ENCODE measurements at regions of chr2 and their contacts with region 1.

Region 1: DNA sequence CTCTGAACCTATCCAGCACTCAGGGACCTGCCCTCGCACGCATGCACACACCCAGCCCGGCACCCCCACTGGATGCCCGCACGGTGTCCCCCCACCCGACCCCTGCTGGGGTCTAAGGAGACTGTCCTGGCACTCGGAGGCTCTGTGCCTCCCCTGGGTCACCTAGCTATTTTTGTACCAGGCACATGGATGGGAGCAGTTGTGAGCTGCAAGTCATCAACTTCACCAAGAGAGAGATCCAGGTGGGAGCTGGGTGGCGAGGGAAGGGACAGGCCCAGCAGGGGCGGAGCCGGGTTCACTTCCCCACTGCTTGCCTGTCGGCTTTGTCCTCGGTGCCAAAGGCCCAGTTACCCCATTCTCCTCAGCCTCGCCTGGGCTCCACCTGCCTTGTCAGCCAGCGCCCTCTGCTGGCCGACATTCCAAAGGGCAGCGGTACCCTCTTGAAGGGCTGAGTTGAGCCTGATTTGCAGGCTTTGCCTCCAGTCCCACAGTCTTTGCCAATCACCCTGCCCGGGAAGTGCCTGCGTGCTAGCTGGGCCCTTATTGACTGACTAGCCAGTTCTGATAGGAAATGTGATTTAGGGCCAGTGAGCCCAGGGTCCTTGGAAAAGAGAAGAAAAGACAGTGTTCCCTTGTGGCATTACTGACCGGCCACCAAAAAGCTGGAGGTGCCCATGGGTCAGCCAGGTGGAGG is 5.8 kb downstream of the NT5DC4 start:
- DNase-seq: peak; percentile 74 to 93 (median 85)
- ATAC-seq: peak; percentile 99
- H3K4me3 ChIP-seq: no peak overlapping the region
- H3K4me3 Mint-ChIP-seq: no peak overlapping the region
- H3K27ac ChIP-seq: no peak overlapping the region
- H3K27ac Mint-ChIP-seq: no peak overlapping the region
- H3K4me1 ChIP-seq: no peaks in the 10 kb centered on the region
- H3K4me1 Mint-ChIP-seq: peaks cover 4% of the 10 kb centered on the region
- H3K27me3 ChIP-seq: no peaks in the 10 kb centered on the region
- H3K27me3 Mint-ChIP-seq: peaks cover 3% of the 10 kb centered on the region
- CTCF ChIP-seq: peak; percentile 87

Region 2: DNA sequence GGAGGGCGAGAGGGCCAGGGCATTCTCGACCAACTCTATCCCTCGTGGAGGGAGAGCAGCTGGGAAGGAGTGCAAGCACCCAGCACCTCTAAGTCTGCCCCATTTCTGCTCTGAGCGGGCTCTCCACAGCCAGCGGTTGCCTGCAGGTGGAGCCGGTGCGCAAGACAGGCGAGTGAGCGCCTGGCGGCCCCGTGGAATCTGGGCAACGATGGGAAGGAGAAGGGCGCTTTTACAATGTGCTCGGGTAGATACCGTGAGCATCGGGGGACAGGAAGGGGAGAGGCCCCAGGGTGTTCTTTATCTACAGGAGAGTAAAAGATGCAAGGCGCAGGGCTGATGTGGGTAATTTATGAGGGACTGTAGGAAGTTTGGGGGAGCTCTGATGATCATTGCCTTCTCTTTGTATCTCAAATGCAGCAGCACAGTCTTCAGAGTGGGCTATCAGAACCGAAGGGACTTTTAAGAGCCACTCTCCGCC is 245.6 kb before region 1 on chr2:
- CTCF ChIA-PET with region 1: interaction called, 4 read pairs
- POLR2A ChIA-PET with region 1: interaction called, 3 read pairs
- intact Hi-C with region 1: loop called in 1 of 2 experiments (anchors 10 kb)
- DNase-seq: peak; percentile 63 to 90 (median 84)
- ATAC-seq: peak; percentile 78
- H3K4me3 ChIP-seq: peak overlapping the region; percentile 56 to 87
- H3K4me3 Mint-ChIP-seq: peak overlapping the region; percentile 95
- H3K27ac ChIP-seq: peak overlapping the region; percentile 30 to 53
- H3K27ac Mint-ChIP-seq: peak overlapping the region; percentile 93
- H3K4me1 ChIP-seq: peaks cover 16% of the 10 kb centered on the region
- H3K4me1 Mint-ChIP-seq: peaks cover 21% of the 10 kb centered on the region
- H3K27me3 ChIP-seq: no peaks in the 10 kb centered on the region
- H3K27me3 Mint-ChIP-seq: no peaks in the 10 kb centered on the region
- CTCF ChIP-seq: peak; percentile 76

Region 3: DNA sequence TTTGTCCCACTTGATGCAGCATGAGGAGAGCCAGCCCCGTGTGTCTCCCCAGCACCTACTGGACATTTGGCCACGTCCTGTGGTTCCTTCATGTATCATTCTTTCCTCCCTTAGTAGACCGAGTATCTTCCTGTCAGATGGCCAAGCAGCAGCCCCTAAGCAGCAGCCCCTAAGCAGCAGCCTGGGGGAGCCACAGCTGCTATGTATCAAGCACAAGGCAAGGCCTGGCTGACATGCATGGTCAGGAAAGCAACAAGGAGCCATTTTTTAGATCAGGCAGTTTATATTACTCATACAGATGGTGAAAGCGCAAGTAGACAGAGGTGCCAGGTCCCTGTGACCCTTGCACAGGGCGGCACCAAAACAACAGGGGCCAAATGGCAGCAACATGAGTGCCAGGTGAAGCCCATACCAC is 120.1 kb before region 1 on chr2:
- CTCF ChIA-PET with region 1: interaction called, 191 read pairs
- POLR2A ChIA-PET with region 1: no interaction called
- intact Hi-C with region 1: no loop called
- DNase-seq: no peak
- ATAC-seq: no peak
- H3K4me3 ChIP-seq: no peak overlapping the region
- H3K4me3 Mint-ChIP-seq: no peak overlapping the region
- H3K27ac ChIP-seq: no peak overlapping the region
- H3K27ac Mint-ChIP-seq: no peak overlapping the region
- H3K4me1 ChIP-seq: no peaks in the 10 kb centered on the region
- H3K4me1 Mint-ChIP-seq: no peaks in the 10 kb centered on the region
- H3K27me3 ChIP-seq: no peaks in the 10 kb centered on the region
- H3K27me3 Mint-ChIP-seq: no peaks in the 10 kb centered on the region
- CTCF ChIP-seq: no peak

Region 4: DNA sequence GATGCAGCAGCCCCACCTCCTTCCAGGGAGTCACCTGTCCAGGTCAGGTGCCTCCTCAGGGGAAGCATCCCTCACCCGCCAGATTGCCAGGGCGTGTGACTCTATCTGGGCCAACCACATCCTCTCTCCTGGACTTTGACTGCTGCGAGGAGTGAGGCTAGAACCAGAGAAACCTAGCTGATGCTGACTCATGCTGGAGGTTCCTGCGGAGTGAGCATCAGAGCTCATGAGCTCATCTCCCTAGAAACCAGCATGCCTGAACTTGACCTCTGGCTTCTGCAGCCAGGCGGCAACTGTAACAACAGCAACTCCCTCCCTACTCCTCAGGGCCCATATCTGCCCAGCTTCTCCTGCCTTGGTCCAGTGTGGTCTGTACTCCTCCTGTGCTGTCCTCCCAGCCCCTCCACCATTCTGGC is 34.1 kb before region 1 on chr2:
- CTCF ChIA-PET with region 1: interaction called, 51 read pairs
- POLR2A ChIA-PET with region 1: no interaction called
- intact Hi-C with region 1: loop called (anchors 1 kb)
- DNase-seq: peak in 8 of 9 experiments; percentile 20 to 74 (median 51)
- ATAC-seq: peak; percentile 64
- H3K4me3 ChIP-seq: no peak overlapping the region
- H3K4me3 Mint-ChIP-seq: no peak overlapping the region
- H3K27ac ChIP-seq: peak overlapping the region in 1 of 2 experiments; percentile 73
- H3K27ac Mint-ChIP-seq: peak overlapping the region; percentile 60
- H3K4me1 ChIP-seq: peaks cover 17% of the 10 kb centered on the region
- H3K4me1 Mint-ChIP-seq: peaks cover 24% of the 10 kb centered on the region
- H3K27me3 ChIP-seq: no peaks in the 10 kb centered on the region
- H3K27me3 Mint-ChIP-seq: no peaks in the 10 kb centered on the region
- CTCF ChIP-seq: no peak

Region 5: GRCh38 chr2:112712903-112713584 is 13.6 kb before region 1 on chr2:
- CTCF ChIA-PET with region 1: interaction called, 29 read pairs
- POLR2A ChIA-PET with region 1: no interaction called
- intact Hi-C with region 1: no loop called
- DNase-seq: peak in 1 of 9 experiments; percentile 35
- ATAC-seq: no peak
- H3K4me3 ChIP-seq: no peak overlapping the region
- H3K4me3 Mint-ChIP-seq: no peak overlapping the region
- H3K27ac ChIP-seq: no peak overlapping the region
- H3K27ac Mint-ChIP-seq: no peak overlapping the region
- H3K4me1 ChIP-seq: no peaks in the 10 kb centered on the region
- H3K4me1 Mint-ChIP-seq: peaks cover 4% of the 10 kb centered on the region
- H3K27me3 ChIP-seq: no peaks in the 10 kb centered on the region
- H3K27me3 Mint-ChIP-seq: no peaks in the 10 kb centered on the region
- CTCF ChIP-seq: no peak

Region 6: GRCh38 chr2:112749755-112750559 is 23.3 kb after region 1 on chr2:
- CTCF ChIA-PET with region 1: interaction called, 15 read pairs
- POLR2A ChIA-PET with region 1: no interaction called
- intact Hi-C with region 1: no loop called
- DNase-seq: peak; percentile 62 to 87 (median 82)
- ATAC-seq: peak; percentile 94
- H3K4me3 ChIP-seq: no peak overlapping the region
- H3K4me3 Mint-ChIP-seq: peak overlapping the region; percentile 20
- H3K27ac ChIP-seq: peak overlapping the region in 1 of 2 experiments; percentile 48
- H3K27ac Mint-ChIP-seq: peak overlapping the region; percentile 9
- H3K4me1 ChIP-seq: no peaks in the 10 kb centered on the region
- H3K4me1 Mint-ChIP-seq: peaks cover 6% of the 10 kb centered on the region
- H3K27me3 ChIP-seq: no peaks in the 10 kb centered on the region
- H3K27me3 Mint-ChIP-seq: no peaks in the 10 kb centered on the region
- CTCF ChIP-seq: peak; percentile 92

Measured in CD8-positive, alpha-beta T cell (primary cell).